ENCODE measurements at regions of chr5 and their contacts with region 1.

Region 1: GRCh38 chr5:119694284-119694683 is 64.9 kb downstream of the FAM170A start:
- DNase-seq: no peak
- H3K4me3 Mint-ChIP-seq: no peak overlapping the region
- H3K27ac Mint-ChIP-seq: no peak overlapping the region
- H3K4me1 Mint-ChIP-seq: no peaks in the 10 kb centered on the region
- H3K27me3 Mint-ChIP-seq: no peaks in the 10 kb centered on the region

Region 2: DNA sequence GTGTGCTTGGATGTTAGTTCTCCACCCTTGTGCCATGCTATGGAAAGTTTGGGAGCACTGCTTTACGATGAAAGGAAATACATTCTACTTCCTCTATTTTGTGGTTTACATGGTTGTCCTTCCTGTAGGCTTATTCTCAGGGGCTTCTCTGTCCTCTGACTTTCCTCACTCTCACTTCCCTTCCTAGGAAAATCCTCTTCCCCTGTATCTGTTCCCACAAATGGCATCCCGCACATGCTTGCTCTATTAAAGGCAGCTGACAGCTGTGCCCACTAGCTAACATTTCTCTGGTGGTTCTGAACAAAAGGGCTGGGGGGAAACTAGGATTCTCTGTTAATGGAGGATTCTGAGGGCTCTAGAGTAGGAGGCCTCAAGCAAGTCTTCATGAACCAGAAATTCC is 12.6 kb before region 1 on chr5:
- intact Hi-C with region 1: loop called (anchors 2 kb)
- DNase-seq: no peak
- H3K4me3 Mint-ChIP-seq: no peak overlapping the region
- H3K27ac Mint-ChIP-seq: no peak overlapping the region
- H3K4me1 Mint-ChIP-seq: no peaks in the 10 kb centered on the region
- H3K27me3 Mint-ChIP-seq: no peaks in the 10 kb centered on the region

Measured in activated T-helper 1 cell treated with anti-CD3 and anti-CD28 coated beads, Interleukin-12 subunit alpha, Interleukin-12 subunit beta, Interleukin-2, Interleukin-4 antibody, amounts not matched to agents 30 ng/mL and 10 ng/mL and 1 ng/mL, durations not matched to agents 14 hours and 24 hours and 36 hours (primary cell).